PC-9 (cell line): ENCODE measurements at regions of chr10 and their contacts with region 1.

Region 1: DNA sequence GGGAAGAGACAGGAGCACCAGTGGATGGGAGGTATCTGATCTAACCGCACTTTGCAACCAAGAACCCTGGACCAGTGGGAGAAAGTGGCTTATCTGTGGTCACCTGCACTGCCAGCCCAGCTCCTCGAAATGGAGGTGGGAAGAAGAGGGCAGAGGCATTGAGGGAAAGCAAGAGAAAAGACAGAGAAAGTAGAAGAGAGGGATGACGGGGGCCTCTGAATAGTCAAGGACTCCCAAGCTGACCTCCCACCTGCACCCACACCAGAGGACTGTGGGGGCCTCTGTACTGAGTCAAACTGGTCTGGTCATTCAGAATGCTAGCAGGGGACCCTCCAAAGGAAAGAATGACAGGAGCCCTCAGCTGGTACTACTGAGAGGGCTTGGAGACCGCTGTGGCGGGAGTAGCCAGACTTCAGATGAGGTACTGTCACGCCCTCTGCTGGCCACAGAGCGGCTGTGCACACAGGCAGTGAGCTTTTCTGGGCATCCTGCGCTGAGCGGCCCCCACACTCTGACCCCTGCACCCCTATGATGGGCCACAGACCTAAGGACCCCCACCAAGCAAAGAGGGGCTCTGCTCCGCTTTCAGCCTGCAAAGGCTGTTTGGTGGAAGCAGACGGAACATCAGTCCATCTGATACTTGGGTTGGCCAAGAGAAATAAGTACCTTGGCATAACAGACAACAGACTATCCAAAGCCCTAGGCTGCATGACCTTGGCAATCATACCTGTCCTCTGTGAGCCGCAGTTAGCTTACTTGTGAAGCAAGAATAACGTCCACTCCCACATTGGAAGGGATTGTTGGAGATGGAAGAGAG is 112.9 kb downstream of the COL13A1 start:
- DNase-seq: peak in 1 of 2 experiments; percentile 72
- H3K4me3 ChIP-seq: no peak overlapping the region
- H3K27ac ChIP-seq: no peak overlapping the region
- H3K4me1 ChIP-seq: no peaks in the 10 kb centered on the region
- H3K27me3 ChIP-seq: no peaks in the 10 kb centered on the region
- CTCF ChIP-seq: peak; percentile 96

Region 2: DNA sequence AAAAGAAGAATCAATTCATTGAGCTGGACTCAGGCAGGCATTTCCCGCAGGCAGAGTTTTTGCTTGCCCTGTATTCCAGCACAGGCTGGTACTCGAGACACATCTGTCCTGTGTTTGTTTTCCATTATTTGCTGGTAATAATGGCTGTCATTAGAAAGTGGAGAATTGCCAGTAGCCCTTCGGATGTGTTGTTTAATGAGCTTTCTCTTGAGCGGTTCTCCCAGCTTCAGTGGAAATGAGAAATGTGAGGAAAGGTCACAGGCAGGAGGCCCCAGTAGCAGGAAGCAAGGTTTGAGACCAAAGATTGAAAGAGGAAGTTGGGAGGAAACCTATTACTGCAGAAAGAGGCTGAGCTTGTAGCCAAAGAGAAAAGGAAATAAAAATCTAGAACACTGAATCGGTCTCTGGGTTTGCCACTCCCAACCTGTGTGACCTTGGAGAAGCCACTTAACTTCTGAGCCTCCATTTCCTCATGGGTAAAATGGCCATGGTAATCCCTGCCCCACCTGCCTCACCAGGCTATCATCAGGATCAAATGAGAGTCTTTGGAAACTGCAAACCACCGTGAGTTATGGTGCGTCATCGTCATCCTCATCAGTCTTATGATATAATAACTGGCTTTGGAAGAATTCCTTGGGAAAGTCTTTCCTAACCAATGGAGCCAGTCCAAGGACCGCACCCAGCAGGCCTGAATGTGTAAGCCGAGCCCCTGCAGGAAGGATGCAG is 565.6 kb before region 1 on chr10:
- CTCF ChIA-PET with region 1: no interaction called
- POLR2A ChIA-PET with region 1: no interaction called
- intact Hi-C with region 1: no loop called
- DNase-seq: peak; percentile 88 to 98
- H3K4me3 ChIP-seq: peak overlapping the region; percentile 14; the same call in 1 of the 2 replicates
- H3K27ac ChIP-seq: peak overlapping the region; percentile 89
- H3K4me1 ChIP-seq: peaks cover 79% of the 10 kb centered on the region
- H3K27me3 ChIP-seq: no peaks in the 10 kb centered on the region
- CTCF ChIP-seq: no peak

Region 3: DNA sequence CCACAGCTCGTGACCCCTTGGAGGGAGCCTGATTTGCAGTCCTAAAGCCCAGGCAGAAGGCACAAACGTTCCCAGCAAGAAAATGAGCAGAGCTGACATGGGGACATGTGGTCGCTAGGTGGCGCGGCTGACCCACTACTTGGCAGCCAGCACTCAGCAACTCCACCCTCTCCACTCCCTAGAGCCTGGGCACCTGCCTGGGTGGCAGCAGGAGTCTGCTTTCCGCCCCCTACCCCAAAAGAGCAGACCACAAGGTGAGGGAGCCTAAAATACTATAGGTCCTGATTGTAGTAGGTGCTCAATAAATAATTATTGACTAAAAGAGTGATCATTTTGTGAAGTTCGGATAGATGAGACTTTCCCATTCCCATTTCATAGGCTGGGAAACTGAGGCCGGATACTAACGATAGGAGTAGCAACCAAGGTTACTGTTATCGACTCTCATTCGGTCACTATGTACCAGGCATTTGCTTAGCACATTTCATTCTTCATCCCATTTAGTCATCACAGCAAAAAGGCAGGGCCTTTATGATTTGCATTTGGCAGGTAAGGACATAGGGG is 398.8 kb before region 1 on chr10:
- CTCF ChIA-PET with region 1: no interaction called
- POLR2A ChIA-PET with region 1: no interaction called
- intact Hi-C with region 1: loop called (anchors 10 kb)
- DNase-seq: peak; percentile 57 to 74
- H3K4me3 ChIP-seq: no peak overlapping the region
- H3K27ac ChIP-seq: no peak overlapping the region
- H3K4me1 ChIP-seq: no peaks in the 10 kb centered on the region
- H3K27me3 ChIP-seq: no peaks in the 10 kb centered on the region
- CTCF ChIP-seq: peak; percentile 95

Region 4: GRCh38 chr10:69696073-69696731 is 218.4 kb before region 1 on chr10:
- CTCF ChIA-PET with region 1: no interaction called
- POLR2A ChIA-PET with region 1: no interaction called
- intact Hi-C with region 1: loop called (anchors 5 kb)
- DNase-seq: peak; percentile 66 to 90
- H3K4me3 ChIP-seq: no peak overlapping the region
- H3K27ac ChIP-seq: no peak overlapping the region
- H3K4me1 ChIP-seq: no peaks in the 10 kb centered on the region
- H3K27me3 ChIP-seq: peaks cover 47% of the 10 kb centered on the region
- CTCF ChIP-seq: peak; percentile 85

Region 5: GRCh38 chr10:69786791-69787190 is 127.8 kb before region 1 on chr10:
- CTCF ChIA-PET with region 1: interaction called, 4 read pairs
- POLR2A ChIA-PET with region 1: no interaction called
- intact Hi-C with region 1: loop called (anchors 1 kb)
- DNase-seq: no peak
- H3K4me3 ChIP-seq: no peak overlapping the region
- H3K27ac ChIP-seq: no peak overlapping the region
- H3K4me1 ChIP-seq: no peaks in the 10 kb centered on the region
- H3K27me3 ChIP-seq: peaks cover 46% of the 10 kb centered on the region
- CTCF ChIP-seq: peak; percentile 57

Region 6: DNA sequence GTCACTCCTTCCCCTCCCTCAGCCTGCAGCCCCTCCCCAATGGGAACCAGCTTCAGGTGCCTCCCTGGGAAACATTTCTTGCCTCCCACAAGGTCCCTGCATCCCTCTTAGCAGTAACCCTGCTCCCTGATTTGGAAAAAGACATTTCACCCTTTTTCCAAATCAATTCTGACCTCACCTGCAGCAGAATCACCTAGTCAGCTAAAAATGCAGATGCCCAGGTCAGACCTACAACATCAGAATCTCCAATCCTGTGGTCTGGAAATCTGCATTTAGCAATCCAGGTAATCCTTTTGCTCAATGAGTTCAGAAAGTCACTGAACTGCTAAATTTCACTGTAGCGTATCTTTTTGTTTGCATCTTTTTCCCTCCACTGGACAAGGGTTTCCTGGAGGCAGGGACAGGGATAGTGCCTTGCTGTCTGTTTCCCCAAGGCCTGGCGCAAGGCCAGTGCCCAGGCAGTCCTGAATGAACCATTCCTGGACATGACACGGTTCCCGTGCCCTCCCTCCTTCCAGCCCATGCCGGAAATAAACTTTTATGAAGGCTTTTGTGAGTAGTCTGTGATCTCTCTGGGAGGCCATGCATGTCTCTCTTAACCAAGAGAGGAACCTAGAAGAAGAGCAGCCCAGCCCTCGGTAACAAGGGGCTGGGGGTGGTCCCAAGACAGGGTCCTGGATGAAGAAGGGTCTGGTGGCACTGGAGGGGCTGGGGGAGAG is 68.9 kb before region 1 on chr10:
- CTCF ChIA-PET with region 1: interaction called, 11 read pairs
- POLR2A ChIA-PET with region 1: no interaction called
- intact Hi-C with region 1: no loop called
- DNase-seq: peak in 1 of 2 experiments; percentile 54
- H3K4me3 ChIP-seq: no peak overlapping the region
- H3K27ac ChIP-seq: no peak overlapping the region
- H3K4me1 ChIP-seq: peaks cover under 1% of the 10 kb centered on the region; the same call in 1 of the 2 replicates
- H3K27me3 ChIP-seq: no peaks in the 10 kb centered on the region
- CTCF ChIP-seq: no peak

Region 7: GRCh38 chr10:69883310-69884023 is 31.1 kb before region 1 on chr10:
- CTCF ChIA-PET with region 1: interaction called, 7 read pairs
- POLR2A ChIA-PET with region 1: no interaction called
- intact Hi-C with region 1: loop called (anchors 1 kb)
- DNase-seq: peak; percentile 38 to 69
- H3K4me3 ChIP-seq: no peak overlapping the region
- H3K27ac ChIP-seq: no peak overlapping the region
- H3K4me1 ChIP-seq: no peaks in the 10 kb centered on the region
- H3K27me3 ChIP-seq: no peaks in the 10 kb centered on the region
- CTCF ChIP-seq: peak; percentile 71